ENCODE measurements at regions of chr9 and their contacts with region 1.

Region 1: DNA sequence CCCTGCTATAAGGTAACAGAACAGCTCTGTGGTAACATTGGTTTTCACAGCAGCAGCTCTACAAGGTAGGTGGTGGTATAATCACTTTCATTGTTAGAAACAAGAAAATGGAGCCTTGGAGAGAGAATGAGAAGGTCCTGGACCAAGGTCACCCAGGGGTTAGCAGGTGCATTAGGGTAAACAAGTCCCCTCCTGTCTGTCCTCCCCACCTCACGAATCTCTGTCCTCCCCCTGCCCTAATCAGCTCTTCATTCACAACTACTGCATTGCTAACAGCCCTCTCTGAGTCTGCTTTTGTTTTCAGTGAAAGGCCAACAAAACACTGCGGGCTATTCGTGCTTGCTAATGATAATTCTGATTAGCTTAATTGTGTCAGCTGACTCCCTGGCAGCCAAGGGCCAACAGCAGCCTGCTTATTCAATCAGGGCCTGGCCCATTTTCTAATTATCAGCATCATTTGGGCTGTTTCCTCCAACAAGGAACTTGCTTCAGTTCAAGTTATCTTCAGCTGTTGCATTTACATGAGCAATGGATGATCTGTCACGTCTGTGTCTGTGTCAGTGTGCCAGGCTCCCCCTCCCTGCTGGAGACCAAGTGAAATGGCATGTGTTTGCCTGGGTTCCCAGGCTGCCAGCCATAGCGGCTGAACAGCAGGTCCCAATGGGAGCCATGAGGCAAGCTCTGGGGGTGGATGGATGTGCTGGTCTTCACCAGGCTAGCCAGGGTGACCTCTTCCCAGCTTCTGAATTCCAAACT is 56.7 kb upstream of the EQTN start:
- H3K4me3 Mint-ChIP-seq: no peak overlapping the region
- H3K27ac Mint-ChIP-seq: peak overlapping the region; percentile 77
- H3K4me1 Mint-ChIP-seq: peaks cover 82% of the 10 kb centered on the region
- H3K27me3 Mint-ChIP-seq: no peaks in the 10 kb centered on the region

Region 2: GRCh38 chr9:27125030-27125429 is 228.6 kb before region 1 on chr9:
- intact Hi-C with region 1: no loop called
- H3K4me3 Mint-ChIP-seq: no peak overlapping the region
- H3K27ac Mint-ChIP-seq: no peak overlapping the region
- H3K4me1 Mint-ChIP-seq: peaks cover 6% of the 10 kb centered on the region
- H3K27me3 Mint-ChIP-seq: no peaks in the 10 kb centered on the region

Region 3: GRCh38 chr9:27460226-27461023 is 106.8 kb after region 1 on chr9:
- intact Hi-C with region 1: loop called (anchors 1 kb)
- H3K4me3 Mint-ChIP-seq: no peak overlapping the region
- H3K27ac Mint-ChIP-seq: peak overlapping the region; percentile 71
- H3K4me1 Mint-ChIP-seq: peaks cover 75% of the 10 kb centered on the region
- H3K27me3 Mint-ChIP-seq: no peaks in the 10 kb centered on the region